Activated naive CD4-positive, alpha-beta T cell treated with anti-CD3 and anti-CD28 coated beads for 36 hours (primary cell): ENCODE measurements at regions of chr4 and their contacts with region 1.

Region 1: DNA sequence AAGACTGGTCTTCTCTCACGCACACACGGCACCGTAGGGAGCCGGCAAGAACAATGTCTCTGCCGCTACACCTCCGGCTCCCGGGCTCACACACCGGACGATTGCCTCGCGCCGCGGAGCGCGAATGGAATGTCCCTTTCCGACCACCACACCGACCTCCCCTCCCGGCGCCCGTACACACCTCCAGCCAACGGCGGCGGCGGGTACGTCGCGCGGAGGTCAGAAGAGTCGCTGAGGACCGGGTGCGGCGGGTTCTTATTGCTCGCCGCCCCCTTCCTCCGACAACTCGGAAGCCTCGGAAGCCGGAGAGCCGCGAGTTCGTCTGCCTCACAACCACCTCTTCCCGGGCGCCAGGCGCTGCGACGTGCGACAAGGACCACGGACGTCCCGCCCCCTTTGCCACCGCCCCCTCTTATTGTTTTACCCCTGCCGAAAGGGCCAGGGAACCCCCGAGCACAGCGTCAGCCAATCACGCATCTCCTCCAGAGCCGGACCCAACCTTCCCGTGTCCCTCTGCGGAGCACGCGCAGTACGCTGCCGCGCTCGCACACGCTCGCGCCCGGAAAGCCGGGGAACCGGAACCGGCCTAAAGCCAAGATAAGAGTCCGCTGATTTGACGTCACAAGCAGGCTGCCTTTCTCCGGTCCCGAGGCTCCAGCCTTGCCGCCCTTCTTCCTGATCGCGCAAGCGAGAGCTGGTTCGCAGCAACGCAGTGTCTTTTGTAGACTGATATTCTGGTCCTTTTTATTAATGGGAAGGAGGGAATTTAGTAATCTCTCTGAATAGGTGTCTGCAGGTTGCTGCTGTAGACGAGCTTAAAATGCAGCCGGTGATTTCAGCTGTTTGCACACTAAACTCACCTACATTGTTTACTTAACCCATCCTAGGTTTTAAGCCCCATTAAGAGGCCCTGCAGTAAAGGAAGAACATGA is at the start of gene G3BP2:
- DNase-seq: peak; percentile 99
- H3K4me3 Mint-ChIP-seq: peak within 1 kb of the TSS; percentile 97
- H3K27ac Mint-ChIP-seq: peak within 1 kb of the TSS; percentile 99
- H3K4me1 Mint-ChIP-seq: peaks cover 39% of the 10 kb centered on the region
- H3K27me3 Mint-ChIP-seq: no peaks in the 10 kb centered on the region
- total RNA-seq, gene G3BP2: 134 to 144 TPM

Region 2: GRCh38 chr4:75514131-75514948 is 159.0 kb before region 1 on chr4 and contains the starts of genes RCHY1 and THAP6:
- CTCF ChIA-PET with region 1: no interaction called
- intact Hi-C with region 1: loop called (anchors 1 kb)
- DNase-seq: peak; percentile 94
- H3K4me3 Mint-ChIP-seq: no peak within 1 kb of the TSS
- H3K27ac Mint-ChIP-seq: peak within 1 kb of the TSS; percentile 98
- H3K4me1 Mint-ChIP-seq: peaks cover 39% of the 10 kb centered on the region
- H3K27me3 Mint-ChIP-seq: no peaks in the 10 kb centered on the region
- total RNA-seq, gene RCHY1: 31.3 to 34.6 TPM
- total RNA-seq, gene THAP6: 14.3 to 15.4 TPM

Region 3: GRCh38 chr4:75598390-75598789 is 74.9 kb before region 1 on chr4:
- CTCF ChIA-PET with region 1: no interaction called
- intact Hi-C with region 1: no loop called
- DNase-seq: no peak
- H3K4me3 Mint-ChIP-seq: no peak overlapping the region
- H3K27ac Mint-ChIP-seq: no peak overlapping the region
- H3K4me1 Mint-ChIP-seq: no peaks in the 10 kb centered on the region
- H3K27me3 Mint-ChIP-seq: no peaks in the 10 kb centered on the region

Region 4: DNA sequence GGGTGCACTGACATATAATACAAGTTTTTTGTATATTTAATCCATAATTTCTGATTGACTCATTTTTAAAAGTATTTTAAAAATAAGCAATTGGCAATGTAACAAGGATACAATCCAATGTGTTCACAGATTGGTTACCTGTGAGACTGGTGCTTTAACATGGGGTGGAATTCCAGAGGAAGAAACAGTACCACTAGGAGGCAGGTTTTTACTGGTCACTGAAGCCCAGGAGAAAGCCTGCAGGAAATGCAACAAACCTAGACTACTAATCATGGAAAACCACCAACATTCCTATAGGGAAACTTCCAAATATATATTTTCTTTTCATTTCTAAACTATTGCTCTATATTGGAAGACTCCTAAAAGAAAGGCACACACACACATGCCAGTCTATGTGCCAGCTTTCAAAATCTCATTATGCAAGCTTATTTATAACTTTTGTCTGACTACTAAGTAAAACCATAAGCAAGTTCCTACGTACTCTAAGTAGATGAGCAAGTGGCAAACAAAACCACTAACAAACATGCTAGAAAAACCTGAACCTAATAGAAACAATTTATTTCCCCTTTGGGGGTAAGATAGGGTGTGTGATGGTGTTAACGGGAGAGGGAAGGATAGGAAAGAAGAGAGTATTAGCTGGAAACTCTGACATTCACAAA is 19.3 kb before region 1 on chr4:
- CTCF ChIA-PET with region 1: interaction called, 3 read pairs
- intact Hi-C with region 1: loop called (anchors 1 kb)
- DNase-seq: no peak
- H3K4me3 Mint-ChIP-seq: no peak overlapping the region
- H3K27ac Mint-ChIP-seq: peak overlapping the region; percentile 78
- H3K4me1 Mint-ChIP-seq: peaks cover 43% of the 10 kb centered on the region
- H3K27me3 Mint-ChIP-seq: no peaks in the 10 kb centered on the region

Region 5: GRCh38 chr4:75849461-75849860 is 176.2 kb after region 1 on chr4:
- CTCF ChIA-PET with region 1: interaction called, 4 read pairs
- intact Hi-C with region 1: loop called (anchors 1 kb)
- DNase-seq: no peak
- H3K4me3 Mint-ChIP-seq: no peak overlapping the region
- H3K27ac Mint-ChIP-seq: no peak overlapping the region
- H3K4me1 Mint-ChIP-seq: peaks cover 3% of the 10 kb centered on the region
- H3K27me3 Mint-ChIP-seq: peaks cover 2% of the 10 kb centered on the region

Region 6: GRCh38 chr4:76148142-76148865 is 475.0 kb after region 1 on chr4 and contains the start of gene NUP54:
- CTCF ChIA-PET with region 1: no interaction called
- intact Hi-C with region 1: loop called (anchors 1 kb)
- DNase-seq: peak; percentile 97
- H3K4me3 Mint-ChIP-seq: peak within 1 kb of the TSS; percentile 100
- H3K27ac Mint-ChIP-seq: peak within 1 kb of the TSS; percentile 97
- H3K4me1 Mint-ChIP-seq: peaks cover 27% of the 10 kb centered on the region
- H3K27me3 Mint-ChIP-seq: no peaks in the 10 kb centered on the region
- total RNA-seq, gene NUP54: 43.9 to 53.4 TPM

Region 7: DNA sequence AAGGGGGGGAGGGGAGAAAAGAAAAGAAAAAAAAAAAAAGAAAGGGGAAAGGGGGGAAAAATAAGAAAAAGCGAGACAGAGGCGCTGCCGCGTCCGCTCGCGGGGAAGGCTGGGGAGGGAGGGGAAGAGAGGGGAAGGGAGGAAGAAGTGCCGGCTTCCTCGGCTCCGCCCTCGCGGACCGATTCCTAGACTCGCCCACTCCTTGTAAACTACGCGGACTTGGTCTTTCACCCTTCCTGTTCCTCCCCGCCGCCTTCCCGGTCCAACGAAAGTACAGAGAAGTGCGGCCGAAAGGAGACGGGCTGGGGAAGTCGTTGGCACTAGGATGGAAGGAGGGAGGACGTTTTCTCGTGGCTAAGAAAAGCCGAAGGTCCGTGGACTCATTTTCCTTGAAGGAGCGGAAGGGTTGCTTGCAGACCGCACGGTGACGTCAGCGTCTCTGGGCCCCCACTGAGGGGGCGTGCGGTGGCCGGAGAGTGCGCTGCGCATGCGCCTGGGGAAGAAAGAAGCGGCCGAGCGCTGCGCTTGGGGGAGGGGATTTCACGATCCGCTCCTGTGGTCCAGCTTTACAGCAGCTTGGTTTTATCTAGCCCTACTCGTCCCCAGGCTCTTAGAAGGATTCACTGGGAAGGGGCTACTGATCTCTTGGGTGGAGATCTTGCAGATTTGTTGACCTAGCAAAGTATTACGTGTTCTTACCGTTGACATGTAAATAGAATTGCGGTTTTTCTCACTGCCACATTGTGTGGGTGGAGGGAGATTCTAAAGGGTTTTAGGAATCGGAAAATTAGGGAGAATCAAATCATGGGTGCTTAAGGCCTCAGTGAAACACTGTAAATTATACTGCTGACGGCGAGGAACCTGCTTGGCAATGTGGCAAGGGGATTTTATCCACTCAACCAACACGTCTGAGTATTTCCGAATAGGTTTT is 1402.8 kb after region 1 on chr4 and contains the start of gene CCNI:
- CTCF ChIA-PET with region 1: no interaction called
- intact Hi-C with region 1: loop called (anchors 5 kb)
- DNase-seq: peak; percentile 93
- H3K4me3 Mint-ChIP-seq: peak within 1 kb of the TSS; percentile 99
- H3K27ac Mint-ChIP-seq: peak within 1 kb of the TSS; percentile 100
- H3K4me1 Mint-ChIP-seq: peaks cover 40% of the 10 kb centered on the region
- H3K27me3 Mint-ChIP-seq: no peaks in the 10 kb centered on the region
- total RNA-seq, gene CCNI: 211 to 218 TPM